AG04449 (cell line): ENCODE measurements at regions of chr6 and their contacts with region 1.

Region 1: DNA sequence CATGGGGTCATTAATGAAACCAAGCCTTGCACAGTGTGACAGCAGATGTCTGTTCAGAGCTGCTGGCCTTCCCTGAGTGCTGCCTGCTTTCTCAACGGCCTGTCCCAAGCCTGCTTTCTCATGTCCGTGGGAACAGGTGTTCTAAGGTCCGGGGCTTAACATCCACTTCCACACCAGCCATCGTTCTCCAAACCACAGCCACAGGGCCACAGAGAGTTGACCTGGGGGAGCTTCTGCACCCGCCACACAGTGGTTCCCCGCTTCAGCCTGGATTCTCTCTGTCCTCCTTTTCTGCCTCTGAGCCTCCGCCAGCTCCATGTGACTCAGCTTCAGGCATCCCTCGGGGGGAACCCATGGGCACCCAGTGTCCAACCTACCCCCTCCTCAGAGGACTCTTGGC is 26.9 kb upstream of the PPP1R3G start:
- DNase-seq: no peak
- H3K4me3 ChIP-seq: no peak overlapping the region
- CTCF ChIP-seq: no peak

Region 2: GRCh38 chr6:5012519-5012918 is 45.7 kb before region 1 on chr6:
- CTCF ChIA-PET with region 1: no interaction called
- POLR2A ChIA-PET with region 1: no interaction called
- DNase-seq: no peak
- H3K4me3 ChIP-seq: no peak overlapping the region
- CTCF ChIP-seq: no peak

Region 3: DNA sequence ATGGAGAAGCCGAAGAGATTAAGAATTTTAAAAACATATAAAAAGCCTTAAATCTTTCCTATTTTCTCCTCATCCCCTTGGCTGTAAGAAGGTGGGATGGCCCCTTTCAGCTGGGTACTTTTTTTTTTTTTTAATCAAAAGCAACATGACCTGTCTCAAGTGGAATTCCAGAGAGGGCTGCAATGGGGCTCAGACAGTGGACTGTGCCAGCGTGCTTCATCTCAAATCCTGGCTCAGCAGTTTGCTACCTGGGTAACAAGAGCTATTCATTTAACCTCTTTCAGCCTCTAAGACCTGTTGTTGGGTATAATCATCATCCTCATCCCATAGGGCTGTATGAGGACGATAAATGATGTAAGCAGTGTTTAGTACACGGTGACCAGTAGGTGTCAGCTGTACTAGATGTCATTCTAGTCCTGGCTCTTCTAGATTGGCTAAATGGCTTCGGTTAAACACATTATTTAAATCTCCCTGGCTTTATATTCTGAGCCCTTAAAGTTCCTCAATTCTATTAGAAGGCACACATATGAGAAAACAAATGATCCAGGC is 19.9 kb after region 1 on chr6:
- CTCF ChIA-PET with region 1: interaction called, 14 read pairs
- POLR2A ChIA-PET with region 1: no interaction called
- DNase-seq: no peak
- H3K4me3 ChIP-seq: no peak overlapping the region
- CTCF ChIP-seq: no peak

Region 4: GRCh38 chr6:5115168-5115567 is 56.9 kb after region 1 on chr6:
- CTCF ChIA-PET with region 1: interaction called, 13 read pairs
- POLR2A ChIA-PET with region 1: no interaction called
- DNase-seq: no peak
- H3K4me3 ChIP-seq: no peak overlapping the region
- CTCF ChIP-seq: peak; percentile 26

Region 5: DNA sequence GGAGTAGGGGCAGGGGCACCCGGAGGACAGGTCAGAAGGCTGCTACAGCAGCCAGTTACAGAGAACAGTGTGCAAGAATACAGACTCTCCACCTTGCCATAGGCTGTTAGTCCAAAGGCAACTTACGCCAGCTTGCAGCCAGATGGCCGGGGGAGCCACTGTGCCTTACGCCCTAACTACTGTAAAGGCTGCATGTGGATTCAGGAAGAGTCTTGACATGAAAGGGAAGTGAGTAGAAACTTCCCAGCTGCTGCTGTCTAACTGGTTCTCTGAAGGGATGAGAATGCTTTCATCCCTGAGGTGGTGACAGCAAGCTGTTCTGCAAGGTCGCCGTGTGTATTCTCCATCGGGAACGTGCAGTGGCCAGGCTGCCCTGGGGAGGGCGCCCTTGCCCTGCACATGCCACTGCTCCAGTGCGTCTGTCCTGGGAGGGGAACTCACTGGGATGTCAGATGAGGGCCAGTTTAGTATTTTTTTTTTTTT is 156.4 kb after region 1 on chr6:
- CTCF ChIA-PET with region 1: interaction called, 11 read pairs
- POLR2A ChIA-PET with region 1: no interaction called
- DNase-seq: no peak
- H3K4me3 ChIP-seq: no peak overlapping the region
- CTCF ChIP-seq: peak; percentile 93